Activated CD4-positive, alpha-beta T cell treated with anti-CD3 and anti-CD28 coated beads for 36 hours (primary cell): ENCODE measurements at regions of chr7 and their contacts with region 1.

Region 1: GRCh38 chr7:23055582-23056178 is 41.8 kb upstream of the HYCC1 start:
- DNase-seq: peak; percentile 71
- ATAC-seq: peak; percentile 99
- H3K4me3 Mint-ChIP-seq: no peak overlapping the region
- H3K27ac Mint-ChIP-seq: no peak overlapping the region
- H3K4me1 Mint-ChIP-seq: peaks cover 2% of the 10 kb centered on the region
- H3K27me3 Mint-ChIP-seq: no peaks in the 10 kb centered on the region

Region 2: DNA sequence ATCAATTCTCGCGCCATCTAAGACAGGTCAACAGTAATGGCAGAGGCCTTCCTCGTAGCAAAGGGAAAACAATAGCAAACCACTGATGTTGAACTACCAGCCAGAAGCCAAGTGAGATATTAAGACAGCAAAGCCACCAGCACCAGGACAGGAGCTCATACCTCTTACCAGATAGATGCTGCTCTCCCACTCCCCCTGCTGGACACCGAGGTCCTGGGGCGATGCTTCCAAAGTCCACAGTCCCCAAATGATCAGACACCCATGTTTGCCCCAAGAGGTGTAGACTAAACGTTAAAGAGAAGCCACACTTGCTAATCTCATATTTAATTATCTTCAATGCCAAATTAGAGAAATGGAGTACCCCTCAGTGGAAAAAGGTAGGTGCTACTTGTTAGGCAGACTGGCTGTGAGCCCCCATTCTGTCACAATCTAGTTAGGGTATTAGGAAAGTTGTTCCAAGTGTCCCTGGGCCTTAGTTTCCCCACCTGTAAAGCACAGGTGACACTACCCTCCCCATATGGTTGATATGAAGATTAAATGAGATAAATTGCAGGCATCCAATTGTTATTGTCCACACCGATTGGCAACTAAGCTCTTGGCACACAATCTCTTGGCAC is 273.0 kb before region 1 on chr7:
- CTCF ChIA-PET with region 1: interaction called, 17 read pairs
- POLR2A ChIA-PET with region 1: no interaction called
- intact Hi-C with region 1: loop called (anchors 1 kb)
- DNase-seq: peak; percentile 89
- ATAC-seq: peak; percentile 88
- H3K4me3 Mint-ChIP-seq: no peak overlapping the region
- H3K27ac Mint-ChIP-seq: no peak overlapping the region
- H3K4me1 Mint-ChIP-seq: no peaks in the 10 kb centered on the region
- H3K27me3 Mint-ChIP-seq: peaks cover 3% of the 10 kb centered on the region

Region 3: DNA sequence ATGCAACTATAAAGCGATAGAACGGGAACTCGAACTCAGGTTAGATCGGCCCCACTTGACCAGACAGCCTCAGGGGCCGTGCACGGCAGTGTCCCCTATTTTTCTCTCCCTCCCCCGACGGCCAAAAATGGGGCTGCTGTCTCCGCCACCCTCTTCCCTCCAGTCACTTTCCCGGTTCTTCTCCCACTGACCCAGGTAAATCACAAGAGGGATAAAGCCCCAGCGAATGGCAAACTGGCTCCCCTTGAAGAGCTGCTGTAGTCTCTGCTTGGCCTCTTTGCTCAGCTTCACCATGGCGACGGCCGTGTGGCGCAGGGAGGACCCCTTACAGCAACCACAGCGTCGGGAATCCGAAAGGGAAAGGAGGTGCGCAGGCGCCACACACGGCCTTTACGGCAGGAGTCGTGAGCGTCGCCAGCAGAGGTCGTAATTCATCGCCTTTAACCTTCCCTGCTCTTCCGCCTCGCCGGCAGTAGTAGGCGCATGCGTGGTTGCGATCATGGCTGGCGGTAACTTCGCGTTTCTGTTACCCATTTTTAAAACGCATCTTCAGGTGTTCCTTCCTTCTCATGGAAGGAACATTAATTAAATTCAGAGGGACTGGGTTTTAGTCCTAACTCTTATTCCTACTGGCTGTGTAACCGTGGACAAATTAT is 233.1 kb before region 1 on chr7 and contains the start of gene TOMM7:
- CTCF ChIA-PET with region 1: interaction called, 6 read pairs
- POLR2A ChIA-PET with region 1: no interaction called
- intact Hi-C with region 1: loop called (anchors 1 kb)
- DNase-seq: peak; percentile 92
- ATAC-seq: peak; percentile 81
- H3K4me3 Mint-ChIP-seq: peak within 1 kb of the TSS; percentile 98
- H3K27ac Mint-ChIP-seq: peak within 1 kb of the TSS; percentile 93
- H3K4me1 Mint-ChIP-seq: peaks cover 35% of the 10 kb centered on the region
- H3K27me3 Mint-ChIP-seq: peaks cover 6% of the 10 kb centered on the region
- total RNA-seq, gene TOMM7: 73.7 to 254 TPM

Region 4: GRCh38 chr7:23013715-23014649 is 41.7 kb before region 1 on chr7 and contains the start of gene HYCC1:
- CTCF ChIA-PET with region 1: interaction called, 34 read pairs
- POLR2A ChIA-PET with region 1: no interaction called
- intact Hi-C with region 1: loop called (anchors 2 to 5 kb)
- DNase-seq: peak; percentile 99
- ATAC-seq: peak; percentile 99
- H3K4me3 Mint-ChIP-seq: peak within 1 kb of the TSS; percentile 92
- H3K27ac Mint-ChIP-seq: peak within 1 kb of the TSS; percentile 83
- H3K4me1 Mint-ChIP-seq: peaks cover 24% of the 10 kb centered on the region
- H3K27me3 Mint-ChIP-seq: peaks cover 3% of the 10 kb centered on the region
- total RNA-seq, gene HYCC1: 19.2 to 23.9 TPM

Region 5: DNA sequence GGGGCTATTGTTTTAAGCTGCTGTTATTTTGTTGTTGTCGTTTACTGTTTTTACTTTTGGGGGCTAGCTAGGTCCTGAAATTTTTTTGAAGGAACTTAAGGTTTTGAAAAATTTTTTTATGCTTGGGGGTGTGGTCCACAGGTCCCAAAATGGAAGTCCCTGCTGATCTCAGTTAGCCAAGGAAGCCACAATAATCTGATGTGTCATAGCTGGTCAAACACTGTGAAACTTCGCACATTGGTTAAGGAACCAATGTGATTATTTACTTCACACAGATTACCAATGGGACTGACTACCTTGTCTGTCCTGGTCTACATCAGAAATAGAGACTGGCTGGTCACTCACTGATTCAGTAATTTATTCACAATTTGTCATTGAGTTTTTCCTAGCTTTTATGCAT is 12.2 kb before region 1 on chr7:
- CTCF ChIA-PET with region 1: interaction called, 23 read pairs
- POLR2A ChIA-PET with region 1: no interaction called
- intact Hi-C with region 1: no loop called
- DNase-seq: no peak
- ATAC-seq: no peak
- H3K4me3 Mint-ChIP-seq: no peak overlapping the region
- H3K27ac Mint-ChIP-seq: no peak overlapping the region
- H3K4me1 Mint-ChIP-seq: no peaks in the 10 kb centered on the region
- H3K27me3 Mint-ChIP-seq: no peaks in the 10 kb centered on the region

Region 6: DNA sequence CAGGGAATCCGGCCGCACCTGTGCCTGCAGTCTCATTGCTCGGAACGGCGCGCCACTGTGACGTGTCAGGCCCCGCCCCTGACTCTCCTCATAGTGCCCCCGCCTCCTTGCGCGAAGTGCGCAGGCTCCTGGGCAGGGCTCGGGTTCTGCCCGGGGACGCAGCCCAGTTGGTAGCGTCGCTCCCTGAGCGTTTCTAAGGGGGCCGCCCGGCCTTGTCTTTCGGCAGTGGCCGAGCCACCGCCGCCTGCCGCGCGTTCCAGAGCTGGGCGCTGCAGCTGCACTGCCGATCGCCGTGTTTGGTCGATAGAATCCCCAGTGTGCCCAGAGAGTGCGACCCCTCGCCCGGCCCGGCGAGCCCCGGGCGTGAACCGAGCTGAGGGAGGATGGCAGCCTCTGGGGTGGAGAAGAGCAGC is 50.0 kb after region 1 on chr7 and contains the start of gene KLHL7:
- CTCF ChIA-PET with region 1: no interaction called
- POLR2A ChIA-PET with region 1: no interaction called
- intact Hi-C with region 1: no loop called
- DNase-seq: peak; percentile 98
- ATAC-seq: peak; percentile 98
- H3K4me3 Mint-ChIP-seq: peak within 1 kb of the TSS; percentile 97
- H3K27ac Mint-ChIP-seq: peak within 1 kb of the TSS; percentile 94
- H3K4me1 Mint-ChIP-seq: peaks cover 32% of the 10 kb centered on the region
- H3K27me3 Mint-ChIP-seq: no peaks in the 10 kb centered on the region
- total RNA-seq, gene KLHL7: 18.1 to 20.8 TPM

Region 7: GRCh38 chr7:23117841-23118240 is 62.2 kb after region 1 on chr7:
- CTCF ChIA-PET with region 1: no interaction called
- POLR2A ChIA-PET with region 1: no interaction called
- intact Hi-C with region 1: no loop called
- DNase-seq: no peak
- ATAC-seq: no peak
- H3K4me3 Mint-ChIP-seq: no peak overlapping the region
- H3K27ac Mint-ChIP-seq: no peak overlapping the region
- H3K4me1 Mint-ChIP-seq: peaks cover 8% of the 10 kb centered on the region
- H3K27me3 Mint-ChIP-seq: no peaks in the 10 kb centered on the region

Region 8: DNA sequence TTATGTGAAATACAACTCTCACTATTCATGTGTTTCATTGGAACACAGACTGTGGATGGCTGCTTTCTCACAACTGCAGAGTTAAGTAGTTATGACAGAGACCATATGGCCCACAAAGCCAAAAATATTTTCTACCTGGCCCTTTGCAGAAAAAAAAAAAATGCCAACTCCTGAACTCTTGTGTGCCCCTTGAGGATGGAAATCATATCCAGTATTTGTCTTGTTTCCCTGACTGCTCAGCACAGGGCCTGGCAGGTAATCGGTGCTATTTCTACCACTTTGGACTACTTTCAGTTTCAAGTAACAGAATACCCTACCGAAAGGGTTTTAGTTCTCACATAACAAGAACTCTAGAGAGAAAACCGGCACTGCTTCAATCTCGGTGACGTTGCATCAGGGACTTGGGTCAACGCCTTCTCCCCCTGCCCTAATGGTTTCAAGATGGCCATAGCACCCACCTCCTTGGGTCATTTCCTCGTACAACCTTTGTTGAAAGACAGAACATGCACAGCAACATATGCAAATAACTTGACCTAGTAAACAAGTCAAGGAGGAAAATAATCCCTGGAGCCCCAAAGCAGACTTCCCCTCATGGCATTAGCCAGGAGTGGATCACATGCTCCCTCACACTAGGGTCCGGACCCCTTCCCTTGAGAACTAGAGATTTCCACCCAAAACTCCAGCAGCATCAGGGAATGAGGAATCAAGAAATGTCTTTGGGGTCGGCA is 179.1 kb after region 1 on chr7:
- CTCF ChIA-PET with region 1: no interaction called
- POLR2A ChIA-PET with region 1: no interaction called
- intact Hi-C with region 1: no loop called
- DNase-seq: no peak
- ATAC-seq: no peak
- H3K4me3 Mint-ChIP-seq: no peak overlapping the region
- H3K27ac Mint-ChIP-seq: no peak overlapping the region
- H3K4me1 Mint-ChIP-seq: no peaks in the 10 kb centered on the region
- H3K27me3 Mint-ChIP-seq: no peaks in the 10 kb centered on the region

Region 9: DNA sequence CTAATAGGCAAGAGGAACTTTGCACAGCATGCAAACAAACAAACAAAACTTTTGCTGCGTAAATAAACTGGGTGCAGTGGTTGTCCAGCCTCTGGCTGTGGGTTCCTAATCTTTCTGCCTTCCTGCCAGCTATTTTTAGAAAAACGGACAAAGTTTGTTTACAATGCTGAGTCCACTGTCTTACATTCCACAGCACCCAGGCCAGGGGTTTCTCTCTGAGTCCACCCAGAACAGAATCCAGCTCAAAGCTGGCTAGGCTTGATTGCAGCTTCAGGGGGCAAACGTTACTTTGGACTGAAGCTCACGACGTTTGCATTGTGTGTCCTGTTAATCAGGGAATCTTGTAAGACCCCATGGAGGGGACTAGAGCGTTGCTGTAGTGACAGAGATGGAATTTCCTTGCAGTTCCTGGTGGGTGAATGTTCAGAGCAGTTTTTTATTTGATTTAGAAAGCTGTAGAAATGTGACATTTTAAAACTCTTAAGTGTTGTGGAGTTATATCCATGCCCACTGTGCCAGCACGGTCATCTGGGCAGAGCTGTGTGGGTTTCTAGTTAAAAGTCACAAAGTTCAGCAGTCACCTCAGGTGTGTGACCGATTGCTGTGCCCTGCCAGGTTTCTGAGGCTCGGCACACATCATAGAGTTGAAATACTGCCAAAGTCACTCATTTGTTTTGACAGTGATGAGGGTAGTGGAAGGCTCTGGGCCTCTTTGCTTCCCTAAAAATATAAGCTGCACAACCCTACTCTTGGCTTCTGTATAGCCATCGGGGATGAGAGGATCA is 901.3 kb after region 1 on chr7:
- CTCF ChIA-PET with region 1: no interaction called
- POLR2A ChIA-PET with region 1: no interaction called
- intact Hi-C with region 1: no loop called
- DNase-seq: no peak
- ATAC-seq: no peak
- H3K4me3 Mint-ChIP-seq: no peak overlapping the region
- H3K27ac Mint-ChIP-seq: no peak overlapping the region
- H3K4me1 Mint-ChIP-seq: no peaks in the 10 kb centered on the region
- H3K27me3 Mint-ChIP-seq: peaks cover 4% of the 10 kb centered on the region